ENCODE measurements at regions of chr4 and their contacts with region 1.

Region 1: GRCh38 chr4:139030614-139031235 is 15.1 kb downstream of the NOCT start:
- DNase-seq: peak; percentile 56 to 85 (median 60)
- ATAC-seq: peak; percentile 84
- H3K4me3 ChIP-seq: no peak overlapping the region
- H3K27ac ChIP-seq: no peak overlapping the region
- H3K4me1 ChIP-seq: peaks cover 0 to 3% of the 10 kb centered on the region in 2 experiments; a peak in 2 of 5 replicates
- H3K27me3 ChIP-seq: no peaks in the 10 kb centered on the region
- CTCF ChIP-seq: peak; percentile 71 to 91 (median 82)
- EP300 ChIP-seq: no peak
- POLR2A ChIP-seq: no peak
- RAD21 ChIP-seq: peak; percentile 72 to 79

Region 2: GRCh38 chr4:139015269-139015947 is 15.3 kb before region 1 on chr4 and contains the start of gene NOCT:
- CTCF ChIA-PET with region 1: no interaction called
- POLR2A ChIA-PET with region 1: interaction called, 52 read pairs
- in situ Hi-C with region 1: no loop called
- intact Hi-C with region 1: no loop called
- DNase-seq: peak; percentile 86 to 92 (median 88)
- ATAC-seq: peak; percentile 94
- H3K4me3 ChIP-seq: peak within 1 kb of the TSS; percentile 92
- H3K27ac ChIP-seq: peak within 1 kb of the TSS; percentile 92
- H3K4me1 ChIP-seq: peaks cover 24 to 32% of the 10 kb centered on the region in 2 experiments; a peak in 4 of 5 replicates
- H3K27me3 ChIP-seq: no peaks in the 10 kb centered on the region
- CTCF ChIP-seq: peak in 1 of 3 experiments; percentile 4; a peak in 1 of 6 replicates
- EP300 ChIP-seq: no peak; the same call in 1 of the 2 replicates
- POLR2A ChIP-seq: peak; percentile 91
- RAD21 ChIP-seq: no peak
- polyA plus RNA-seq, gene NOCT: 1.3 to 2.8 TPM

Region 3: DNA sequence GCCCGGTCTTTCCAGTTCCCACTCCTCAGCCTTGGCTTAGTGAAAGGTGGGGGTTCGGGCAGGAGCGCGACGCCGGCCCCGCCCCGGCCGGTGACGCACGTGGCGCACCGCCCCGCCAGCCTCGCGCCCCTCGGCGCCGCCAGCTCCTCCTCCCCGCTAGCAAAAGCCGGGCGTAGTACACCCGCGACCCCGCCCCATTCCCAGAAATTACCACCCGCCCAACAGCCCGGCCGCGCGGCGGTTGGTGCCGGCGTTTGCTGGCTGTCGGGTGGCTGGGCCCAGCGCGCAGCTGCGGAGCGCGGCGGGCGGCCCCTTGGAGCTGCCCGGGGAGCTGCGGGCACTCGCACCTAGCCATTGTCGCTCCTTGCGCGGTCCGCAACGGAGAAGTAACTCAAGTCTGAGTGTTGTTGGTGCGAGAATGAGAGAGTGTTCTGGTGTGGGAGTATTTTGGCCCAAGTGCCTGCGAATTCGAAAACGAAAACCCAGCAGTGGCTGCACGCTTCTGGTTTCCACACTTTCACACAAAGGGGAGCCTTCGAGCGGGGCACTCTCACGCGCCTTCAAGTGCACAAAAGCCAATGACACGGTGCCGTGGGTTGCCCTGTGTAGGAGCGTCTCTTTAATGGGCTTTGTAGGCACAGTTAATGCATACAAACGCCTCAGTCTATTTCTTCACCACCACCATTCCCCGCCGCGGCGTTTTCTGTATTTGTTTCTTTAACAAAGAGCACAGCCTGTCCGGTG is 147.3 kb after region 1 on chr4:
- CTCF ChIA-PET with region 1: no interaction called
- POLR2A ChIA-PET with region 1: no interaction called
- in situ Hi-C with region 1: no loop called
- intact Hi-C with region 1: loop called (anchors 5 kb)
- DNase-seq: peak; percentile 89 to 96 (median 90)
- ATAC-seq: peak; percentile 76
- H3K4me3 ChIP-seq: peak overlapping the region; percentile 98
- H3K27ac ChIP-seq: peak overlapping the region; percentile 98
- H3K4me1 ChIP-seq: peaks cover 17 to 23% of the 10 kb centered on the region in 2 experiments; a peak in 4 of 5 replicates
- H3K27me3 ChIP-seq: no peaks in the 10 kb centered on the region
- CTCF ChIP-seq: no peak
- EP300 ChIP-seq: peak; percentile 63; the same call in 1 of the 2 replicates
- POLR2A ChIP-seq: peak; percentile 93
- RAD21 ChIP-seq: no peak

Region 4: DNA sequence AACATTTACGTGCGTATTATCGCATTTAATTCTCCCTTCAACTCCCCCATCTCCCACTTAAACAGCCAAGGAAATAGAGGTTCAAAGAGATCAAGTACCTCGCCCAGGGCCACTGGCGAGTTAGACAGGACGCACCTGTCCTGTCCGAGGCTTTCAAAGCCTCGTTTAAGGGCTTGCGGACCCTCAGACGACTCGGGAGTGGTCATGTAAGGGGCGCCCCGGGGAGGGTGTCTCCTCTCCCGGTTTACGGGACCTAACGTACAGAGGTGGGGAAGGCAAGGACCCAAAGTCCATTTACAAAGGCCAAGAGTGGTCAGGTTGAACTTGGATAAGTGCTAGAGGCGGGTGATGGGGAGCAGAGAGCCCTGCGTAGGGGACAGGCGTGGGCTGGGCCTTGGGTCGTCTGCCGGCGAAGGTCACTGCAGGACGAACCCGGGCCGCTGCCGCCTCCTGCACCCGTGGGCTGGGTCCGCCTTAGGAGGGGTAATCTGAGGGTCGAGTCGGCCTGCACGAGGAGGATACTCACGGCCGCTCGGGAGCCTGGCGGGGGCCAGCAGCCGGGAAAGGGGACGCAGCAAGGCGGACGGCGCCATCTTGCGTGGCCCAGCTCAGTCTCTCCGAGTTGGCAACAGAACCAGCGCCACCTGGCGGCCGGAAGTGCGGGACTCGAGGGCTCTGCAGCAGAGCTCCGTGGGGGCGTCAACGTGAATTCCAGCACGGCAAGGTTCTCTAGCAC is 264.6 kb after region 1 on chr4:
- CTCF ChIA-PET with region 1: no interaction called
- POLR2A ChIA-PET with region 1: interaction called, 6 read pairs
- in situ Hi-C with region 1: no loop called
- intact Hi-C with region 1: loop called (anchors 5 kb)
- DNase-seq: peak; percentile 81 to 98 (median 86)
- ATAC-seq: peak; percentile 89
- H3K4me3 ChIP-seq: peak overlapping the region; percentile 82
- H3K27ac ChIP-seq: peak overlapping the region; percentile 90
- H3K4me1 ChIP-seq: peaks cover 7 to 12% of the 10 kb centered on the region in 2 experiments; a peak in 4 of 5 replicates
- H3K27me3 ChIP-seq: no peaks in the 10 kb centered on the region
- CTCF ChIP-seq: peak; percentile 96 to 99 (median 99)
- EP300 ChIP-seq: peak; percentile 51; the same call in 1 of the 2 replicates
- POLR2A ChIP-seq: peak; percentile 93
- RAD21 ChIP-seq: peak; percentile 77 to 84

Region 5: DNA sequence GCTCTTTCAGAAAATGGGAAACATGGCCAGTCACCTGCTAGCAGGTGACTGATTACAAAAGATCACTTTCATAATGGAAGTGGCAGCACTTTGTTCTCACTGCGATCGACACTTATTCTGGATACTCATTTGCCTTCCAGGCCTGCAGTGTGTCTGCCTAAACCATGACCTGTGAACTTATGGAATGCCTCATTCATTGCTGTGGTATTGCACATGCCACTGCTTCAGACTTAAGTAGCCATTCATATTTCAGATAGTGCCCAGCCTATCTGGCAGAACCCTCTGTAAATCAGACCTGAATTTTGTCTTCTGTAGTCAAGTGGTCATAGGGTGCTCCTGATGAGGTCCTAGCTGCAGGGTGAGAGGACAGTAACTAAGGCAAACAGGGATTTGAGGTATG is 611.6 kb after region 1 on chr4:
- CTCF ChIA-PET with region 1: no interaction called
- POLR2A ChIA-PET with region 1: interaction called, 3 read pairs
- in situ Hi-C with region 1: no loop called
- intact Hi-C with region 1: loop called (anchors 10 kb)
- DNase-seq: no peak
- ATAC-seq: no peak
- H3K4me3 ChIP-seq: no peak overlapping the region
- H3K27ac ChIP-seq: no peak overlapping the region
- H3K4me1 ChIP-seq: no peaks in the 10 kb centered on the region
- H3K27me3 ChIP-seq: peaks cover 4 to 20% of the 10 kb centered on the region in 2 experiments; a peak in 3 of 5 replicates
- CTCF ChIP-seq: no peak
- EP300 ChIP-seq: no peak
- POLR2A ChIP-seq: no peak
- RAD21 ChIP-seq: no peak